Right cardiac atrium (tissue), 5 donors: ENCODE measurements at regions of chr9 and their contacts with region 1.

Region 1: GRCh38 chr9:27333241-27334052 is 36.5 kb upstream of the EQTN start:
- DNase-seq: peak; percentile 62 to 73 (median 71)
- ATAC-seq: peak; percentile 94
- H3K4me3 ChIP-seq: no peak overlapping the region
- H3K27ac ChIP-seq: no peak overlapping the region
- H3K4me1 ChIP-seq: peaks cover 6% of the 10 kb centered on the region
- H3K27me3 ChIP-seq: no peaks in the 10 kb centered on the region

Region 2: GRCh38 chr9:27529316-27530278 is 196.2 kb after region 1 on chr9 and contains the start of gene MOB3B:
- intact Hi-C with region 1: loop called (anchors 5 to 10 kb)
- DNase-seq: peak; percentile 84 to 95 (median 94)
- ATAC-seq: peak; percentile 90 to 91
- H3K4me3 ChIP-seq: peak within 1 kb of the TSS; percentile 71
- H3K27ac ChIP-seq: no peak within 1 kb of the TSS
- H3K4me1 ChIP-seq: peaks cover 2% of the 10 kb centered on the region
- H3K27me3 ChIP-seq: no peaks in the 10 kb centered on the region
- total RNA-seq, gene MOB3B: 1.6 to 2.2 (median 2.1) TPM

Region 3: DNA sequence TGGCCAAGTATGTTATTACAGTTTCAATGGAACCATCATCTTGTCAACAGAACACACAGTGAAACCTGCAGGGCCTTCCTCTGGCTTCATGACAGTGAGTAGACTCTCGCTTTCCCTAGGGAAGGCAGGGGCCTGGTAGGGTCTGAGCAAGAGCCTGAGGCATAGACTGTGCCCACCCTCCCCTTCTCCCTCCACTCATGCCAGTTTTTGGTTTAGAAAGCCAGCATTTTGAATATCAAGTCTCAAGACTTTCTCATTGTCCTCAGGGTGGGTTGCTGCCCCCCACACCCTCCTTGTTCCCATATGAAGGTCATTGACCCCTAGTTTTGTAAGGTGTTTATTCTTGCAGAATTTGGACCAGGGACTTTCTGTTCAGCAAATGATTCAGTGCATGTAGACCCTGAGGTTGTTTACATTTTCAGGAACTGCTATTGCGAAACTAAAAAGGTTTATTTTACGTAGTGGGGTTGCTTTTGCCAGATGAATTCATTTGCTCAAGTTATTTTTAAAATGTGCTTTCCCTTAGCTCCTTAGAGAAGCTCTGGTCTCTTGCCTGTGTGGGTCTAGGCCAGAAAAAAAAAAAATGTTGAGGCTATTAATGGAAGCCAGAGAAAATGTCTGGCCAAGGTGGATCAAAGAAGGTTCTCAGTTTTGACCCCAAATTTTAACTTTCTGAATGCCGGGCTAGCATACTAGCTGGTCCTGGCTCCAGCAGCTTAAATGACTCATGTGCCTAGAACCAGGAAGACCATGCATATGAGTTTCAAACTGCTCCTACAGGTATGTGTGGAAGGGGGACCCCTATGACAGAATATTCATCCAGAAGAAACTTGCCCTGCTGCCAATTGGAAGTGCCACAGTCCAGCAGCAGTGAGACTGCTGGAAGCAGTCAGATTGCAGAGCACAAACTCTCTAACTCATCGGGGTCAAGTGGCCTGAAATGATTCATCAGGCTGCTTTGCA is 206.3 kb after region 1 on chr9:
- intact Hi-C with region 1: loop called in 2 of 4 experiments (anchors 5 kb)
- DNase-seq: peak; percentile 30 to 64 (median 36)
- ATAC-seq: peak; percentile 69 to 86
- H3K4me3 ChIP-seq: no peak overlapping the region
- H3K27ac ChIP-seq: peak overlapping the region; percentile 80
- H3K4me1 ChIP-seq: peaks cover 5% of the 10 kb centered on the region
- H3K27me3 ChIP-seq: no peaks in the 10 kb centered on the region

Region 4: DNA sequence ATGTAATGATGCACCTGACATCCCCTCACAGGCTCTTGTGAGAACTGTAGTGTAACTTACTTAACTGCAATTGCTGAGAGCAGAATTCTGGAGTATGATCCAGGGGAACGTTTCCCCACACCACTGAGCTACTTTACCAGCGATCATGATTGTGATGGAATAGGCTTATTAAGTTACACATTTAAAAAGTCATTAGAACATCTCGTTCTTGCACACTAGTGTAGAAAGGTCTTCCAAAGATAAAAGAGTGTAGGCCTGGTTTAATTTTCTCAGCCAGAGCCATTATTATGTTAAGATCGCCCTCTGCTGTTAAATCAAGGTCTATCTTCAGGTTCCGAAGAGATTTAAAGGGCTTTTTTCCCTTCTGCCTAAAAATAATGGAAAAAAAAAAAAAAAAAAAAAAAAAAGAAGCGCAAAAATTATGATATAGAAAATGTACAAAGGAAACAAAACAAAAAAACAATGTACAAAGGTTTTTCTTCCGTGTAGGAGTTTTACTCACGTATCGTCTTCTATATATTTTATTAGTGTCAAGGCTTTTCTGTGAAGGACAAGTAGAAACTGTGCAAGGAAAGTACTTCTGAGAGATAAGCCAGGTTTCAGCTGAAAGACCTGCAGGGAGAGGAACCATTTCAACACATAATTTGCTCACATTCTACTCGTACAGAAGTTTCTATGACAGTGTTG is 214.8 kb after region 1 on chr9:
- intact Hi-C with region 1: loop called (anchors 5 kb)
- DNase-seq: no peak
- ATAC-seq: peak; percentile 80 to 89
- H3K4me3 ChIP-seq: no peak overlapping the region
- H3K27ac ChIP-seq: no peak overlapping the region
- H3K4me1 ChIP-seq: peaks cover 2% of the 10 kb centered on the region
- H3K27me3 ChIP-seq: no peaks in the 10 kb centered on the region

Region 5: GRCh38 chr9:27554712-27555111 is 221.3 kb after region 1 on chr9:
- intact Hi-C with region 1: loop called in 3 of 4 experiments (anchors 5 kb)
- DNase-seq: no peak
- ATAC-seq: no peak
- H3K4me3 ChIP-seq: no peak overlapping the region
- H3K27ac ChIP-seq: no peak overlapping the region
- H3K4me1 ChIP-seq: no peaks in the 10 kb centered on the region
- H3K27me3 ChIP-seq: no peaks in the 10 kb centered on the region